Mammary epithelial cell (primary cell): ENCODE measurements at regions of chr21 and their contacts with region 1.

Region 1: DNA sequence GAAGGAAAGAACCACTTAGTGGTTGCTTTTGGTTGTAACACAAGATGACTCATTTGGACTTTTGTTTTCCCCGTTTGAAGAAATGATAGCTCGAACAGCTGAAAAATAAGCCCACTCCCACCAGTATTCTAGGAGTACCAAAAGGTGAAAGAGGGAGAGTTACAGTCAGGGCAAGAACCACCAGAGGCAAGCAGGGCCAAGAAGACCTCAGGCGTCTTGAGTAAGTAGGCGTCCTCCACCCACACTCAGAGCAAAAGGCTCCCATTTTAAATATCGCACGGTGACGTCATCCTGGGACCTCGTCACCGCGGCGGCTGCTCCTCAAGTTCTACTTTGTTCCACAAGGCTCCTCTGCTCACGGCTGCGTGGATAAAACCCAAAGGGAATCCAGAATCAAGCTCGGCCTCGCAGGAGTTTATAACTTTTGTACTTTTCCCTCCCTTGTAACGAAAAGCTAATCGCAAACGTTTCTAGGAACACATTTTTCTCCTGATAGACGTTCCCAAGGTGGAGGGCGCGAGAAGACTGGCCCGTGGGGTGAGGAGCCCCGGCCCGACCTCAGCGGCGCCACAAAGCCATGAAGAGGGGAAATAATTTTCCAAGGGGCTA is 1.2 kb downstream of the BTG3 start:
- DNase-seq: peak; percentile 89
- H3K4me3 ChIP-seq: peak overlapping the region; percentile 75 to 93 (median 90)
- H3K27ac ChIP-seq: peak overlapping the region; percentile 96
- H3K4me1 ChIP-seq: peaks cover 27% of the 10 kb centered on the region
- H3K27me3 ChIP-seq: no peaks in the 10 kb centered on the region
- CTCF ChIP-seq: peak in 1 of 2 donors; percentile 3

Region 2: DNA sequence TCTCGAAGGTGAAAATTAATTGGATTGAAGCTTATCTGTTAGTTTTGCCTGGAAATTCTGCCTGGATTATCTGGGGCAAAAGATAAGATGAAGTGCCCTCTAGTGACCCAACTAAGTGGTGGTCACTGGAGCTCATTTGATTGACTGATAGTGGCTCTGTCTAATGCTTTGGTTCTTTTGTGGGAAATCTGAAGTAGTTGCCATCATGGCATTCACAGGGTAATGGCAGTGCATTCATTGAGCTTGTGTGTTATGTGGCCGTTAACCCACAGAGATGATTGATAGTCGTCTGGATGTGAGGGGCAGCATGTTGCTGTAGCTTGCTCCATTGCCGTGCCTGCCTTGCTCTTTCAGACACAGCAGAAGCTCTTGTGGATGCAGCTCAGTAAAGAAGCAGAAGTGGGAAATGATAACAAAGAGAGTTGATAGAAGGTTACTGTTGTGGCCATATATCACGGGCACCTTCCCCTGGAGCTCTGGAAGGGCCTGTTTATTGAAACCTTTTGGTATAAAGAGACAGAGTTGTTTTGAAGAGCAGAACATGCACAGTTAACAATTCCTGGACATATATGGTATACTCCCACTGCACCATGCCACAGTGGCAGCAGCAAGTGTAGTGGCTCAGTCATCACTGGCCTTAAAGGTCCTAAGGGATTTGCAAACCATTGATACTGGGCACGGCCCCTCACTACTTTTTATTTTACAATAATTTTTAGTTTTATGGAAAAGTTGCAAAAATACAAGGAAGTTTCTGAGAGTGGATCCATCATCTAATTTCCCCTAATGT is 56.6 kb before region 1 on chr21:
- CTCF ChIA-PET with region 1: no interaction called
- dilution Hi-C with region 1: no loop called
- in situ Hi-C with region 1: no loop called
- intact Hi-C with region 1: no loop called
- DNase-seq: no peak
- H3K4me3 ChIP-seq: no peak overlapping the region
- H3K27ac ChIP-seq: no peak overlapping the region
- H3K4me1 ChIP-seq: no peaks in the 10 kb centered on the region
- H3K27me3 ChIP-seq: no peaks in the 10 kb centered on the region
- CTCF ChIP-seq: peak; percentile 27 to 50

Region 3: DNA sequence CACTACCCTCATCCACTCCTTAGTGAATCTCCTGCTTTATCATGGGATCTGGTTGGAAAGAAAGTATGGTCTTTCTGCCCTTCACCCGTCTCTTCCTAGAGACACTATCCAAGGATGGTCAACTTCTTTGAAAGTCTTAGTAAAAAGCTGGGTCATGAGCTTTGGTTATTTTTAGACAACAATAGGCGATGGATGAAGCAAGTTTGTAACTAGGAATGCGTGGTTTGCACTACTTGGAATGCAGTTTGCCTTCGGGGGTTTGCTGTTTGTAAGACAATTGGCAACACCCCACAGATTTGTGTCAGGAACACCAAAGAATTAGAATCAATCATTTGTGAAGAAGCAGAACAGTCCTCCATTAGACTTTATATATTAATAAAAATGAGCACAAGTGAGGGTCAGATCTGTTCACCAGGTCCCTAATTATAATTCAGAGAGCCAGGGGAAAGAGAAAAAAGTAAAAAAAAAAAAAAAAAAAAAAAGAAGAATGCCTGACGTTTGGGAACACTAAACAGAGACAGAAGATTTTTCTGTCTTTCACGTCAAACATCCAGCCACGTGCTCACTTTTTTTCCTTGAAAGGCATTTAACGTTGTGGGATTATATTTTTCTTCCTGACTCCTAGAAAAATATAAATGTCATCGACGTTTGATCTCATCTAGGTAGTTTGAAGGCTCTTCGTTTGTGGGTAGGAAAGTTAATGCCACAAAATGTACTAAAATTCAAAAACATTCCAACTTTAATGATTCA is 61.9 kb after region 1 on chr21:
- CTCF ChIA-PET with region 1: interaction called, 4 read pairs
- dilution Hi-C with region 1: no loop called
- in situ Hi-C with region 1: no loop called
- intact Hi-C with region 1: loop called (anchors 5 kb)
- DNase-seq: peak; percentile 33
- H3K4me3 ChIP-seq: no peak overlapping the region
- H3K27ac ChIP-seq: no peak overlapping the region
- H3K4me1 ChIP-seq: peaks cover 14% of the 10 kb centered on the region
- H3K27me3 ChIP-seq: no peaks in the 10 kb centered on the region
- CTCF ChIP-seq: no peak

Region 4: DNA sequence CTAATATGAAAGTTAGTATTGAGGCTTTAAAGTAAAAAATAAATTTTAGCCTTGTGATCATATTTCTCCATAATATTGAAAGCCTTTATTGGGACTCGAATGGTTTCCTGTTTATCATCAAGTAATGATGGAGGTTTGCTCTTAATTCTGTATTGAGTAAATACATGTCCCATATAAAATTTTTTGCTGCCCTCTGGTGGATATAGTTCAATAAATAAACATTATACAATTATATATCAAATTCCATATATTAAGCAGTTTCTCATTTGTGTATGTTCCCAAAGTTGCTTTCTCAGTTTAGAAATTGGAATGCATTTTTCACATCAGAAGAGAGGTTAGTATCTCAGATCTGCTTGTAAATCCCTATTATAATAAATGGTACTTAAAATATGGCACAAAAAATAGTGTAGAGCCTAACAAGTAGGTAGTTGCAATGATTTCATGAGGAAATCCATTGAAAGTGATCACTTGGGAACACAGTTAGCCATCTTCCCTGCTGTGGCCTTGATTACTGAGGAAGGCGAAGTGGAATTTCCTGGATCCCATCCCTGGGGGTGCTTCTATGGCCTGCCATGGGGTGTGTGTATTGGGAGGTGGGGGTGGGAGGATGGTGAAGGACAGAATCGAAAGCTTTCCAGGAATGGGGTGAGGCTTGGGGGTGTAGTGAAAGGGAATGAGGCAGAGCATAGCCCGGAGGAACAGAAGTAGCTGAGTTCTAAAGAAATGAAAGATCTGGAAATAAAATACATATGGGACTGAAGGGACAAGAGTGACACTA is 291.7 kb after region 1 on chr21:
- CTCF ChIA-PET with region 1: no interaction called
- dilution Hi-C with region 1: no loop called
- in situ Hi-C with region 1: no loop called
- intact Hi-C with region 1: loop called (anchors 5 kb)
- DNase-seq: no peak
- H3K4me3 ChIP-seq: no peak overlapping the region
- H3K27ac ChIP-seq: no peak overlapping the region
- H3K4me1 ChIP-seq: peaks cover 3% of the 10 kb centered on the region
- H3K27me3 ChIP-seq: no peaks in the 10 kb centered on the region
- CTCF ChIP-seq: peak in 1 of 2 donors; percentile 25